Vagina (tissue), 2 donors: ENCODE measurements at regions of chr1 and their contacts with region 1.

Region 1: DNA sequence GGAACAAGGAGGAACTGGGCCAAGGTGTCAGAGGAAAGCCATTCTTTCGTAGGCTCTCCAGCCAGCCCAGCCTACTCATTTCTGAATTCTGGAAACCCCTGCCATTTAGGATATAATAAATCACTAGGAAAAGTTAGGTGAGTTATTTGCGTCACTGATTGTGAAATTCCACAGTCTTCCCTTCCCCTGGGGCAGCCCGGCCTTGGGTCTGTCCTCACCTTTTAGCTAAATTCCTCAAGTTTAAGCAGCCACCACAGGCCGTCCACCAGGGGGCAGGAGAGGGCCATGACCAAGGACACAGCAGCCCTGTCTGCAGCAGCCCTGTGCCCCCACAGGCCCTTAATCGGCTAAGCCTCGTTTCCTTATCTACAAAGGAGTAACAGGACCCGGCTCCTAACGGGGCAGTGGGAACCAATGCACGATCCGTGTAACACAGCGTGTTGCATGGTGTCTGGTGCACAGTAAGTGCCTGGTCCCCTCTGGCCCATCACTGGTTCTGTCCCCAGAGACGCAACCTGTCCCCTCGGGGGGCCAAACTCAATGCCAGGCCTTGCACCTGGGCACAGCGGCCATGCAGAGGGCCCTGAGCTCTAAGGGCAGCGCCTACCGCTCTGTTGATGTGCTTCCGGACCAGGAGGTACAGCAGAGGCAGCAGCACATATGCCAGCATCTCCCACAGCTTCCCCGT is 18.1 kb downstream of the GPR157 start:
- DNase-seq: peak in 1 of 2 donors; percentile 94
- H3K4me3 ChIP-seq: no peak overlapping the region
- H3K27ac ChIP-seq: peak overlapping the region; percentile 3
- H3K4me1 ChIP-seq: peaks cover 16% of the 10 kb centered on the region
- H3K27me3 ChIP-seq: no peaks in the 10 kb centered on the region
- CTCF ChIP-seq: peak; percentile 90 to 95 (median 90)
- POLR2A ChIP-seq: no peak

Region 2: DNA sequence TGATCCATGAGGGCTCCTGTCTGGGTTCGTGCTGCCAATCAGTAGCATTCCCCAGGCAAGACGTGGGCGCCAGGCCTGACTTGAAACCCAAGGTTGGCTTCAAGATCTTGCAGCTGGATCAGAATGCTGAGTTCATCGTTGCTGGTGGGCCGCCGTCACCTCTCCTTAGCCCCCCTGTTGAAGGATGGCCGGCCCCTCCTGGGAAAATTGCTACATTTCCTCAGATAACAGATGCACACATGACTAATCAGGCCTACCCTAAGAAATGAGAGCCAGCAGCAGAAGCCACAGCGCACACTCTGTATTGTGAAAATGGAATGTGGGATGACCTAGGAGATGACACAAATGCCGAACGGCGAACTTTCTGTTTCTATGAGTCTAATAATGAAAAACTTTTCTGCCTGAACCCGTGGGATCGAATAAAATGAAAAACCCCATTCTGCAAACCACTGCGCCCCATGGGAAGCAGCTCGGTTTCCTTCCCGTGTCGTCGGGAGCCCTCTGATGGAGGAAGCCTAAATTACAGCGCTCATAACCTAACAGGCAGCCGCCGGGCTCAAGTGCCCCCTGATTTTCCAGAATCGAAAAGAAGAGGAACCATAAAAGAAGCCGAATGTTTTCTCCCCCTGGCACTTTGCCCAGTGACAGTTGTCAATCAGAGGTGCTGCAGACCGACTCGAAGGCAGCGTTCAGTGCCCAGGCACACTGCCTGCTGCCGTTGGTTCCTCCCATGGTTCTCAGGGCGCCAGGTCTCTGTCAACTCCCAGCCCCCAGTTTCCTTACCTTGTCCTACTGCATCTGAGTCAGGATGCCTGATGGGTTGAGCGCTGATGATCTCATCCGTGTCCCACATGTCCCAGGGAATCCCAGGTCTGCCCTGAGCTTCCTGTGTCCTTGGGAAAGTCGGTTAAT is 85.6 kb after region 1 on chr1:
- intact Hi-C with region 1: loop called (anchors 5 kb)
- DNase-seq: no peak
- H3K4me3 ChIP-seq: no peak overlapping the region
- H3K27ac ChIP-seq: peak overlapping the region; percentile 15
- H3K4me1 ChIP-seq: peaks cover 29% of the 10 kb centered on the region
- H3K27me3 ChIP-seq: no peaks in the 10 kb centered on the region
- CTCF ChIP-seq: peak; percentile 49 to 84 (median 78)
- POLR2A ChIP-seq: no peak

Region 3: DNA sequence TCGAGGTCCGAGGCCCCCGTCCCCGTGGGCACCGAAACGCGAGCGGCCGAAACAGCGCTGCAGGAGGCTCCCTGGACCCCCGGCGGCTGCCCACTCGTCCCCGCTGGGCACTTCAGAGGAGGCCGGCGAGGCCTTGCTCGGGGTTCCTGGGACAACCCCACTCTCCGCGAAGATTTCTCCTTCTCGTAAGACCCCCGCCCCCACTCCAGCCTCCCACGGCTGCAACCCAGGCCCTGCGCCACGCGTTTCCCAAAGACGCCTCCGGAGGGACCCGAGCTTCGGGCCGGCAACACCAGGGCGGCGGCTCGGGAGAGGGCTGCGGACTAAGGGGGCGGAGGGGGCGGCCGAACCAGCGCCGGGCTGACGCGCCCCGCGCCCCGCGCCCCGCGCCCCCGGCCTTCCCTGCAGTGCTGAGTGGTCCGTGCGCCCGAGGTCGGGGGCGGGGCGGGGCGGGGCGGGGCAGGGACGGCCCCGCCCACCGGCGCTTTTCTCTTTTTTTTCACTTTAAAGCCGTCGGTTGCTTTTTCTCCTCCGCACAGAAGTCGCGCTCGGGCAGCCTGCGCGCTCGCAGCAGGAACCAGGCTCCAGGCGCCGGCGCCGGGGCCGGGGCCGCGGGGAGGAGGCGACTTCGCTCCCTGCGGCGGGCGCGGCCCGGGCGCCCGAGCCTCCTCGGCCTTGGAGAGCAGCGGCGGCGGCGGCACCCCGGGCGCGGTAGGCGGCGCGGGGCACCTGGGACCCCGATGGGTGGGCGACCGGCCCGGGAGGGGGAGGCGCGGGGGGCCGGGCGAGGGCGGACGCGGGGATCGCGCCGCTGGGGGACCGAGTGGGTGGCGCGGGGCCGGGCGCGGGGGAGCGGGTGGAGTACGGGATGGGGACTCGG is 181.8 kb after region 1 on chr1 and contains the start of gene SPSB1:
- intact Hi-C with region 1: no loop called
- DNase-seq: no peak
- H3K4me3 ChIP-seq: peak within 1 kb of the TSS; percentile 94 to 98
- H3K27ac ChIP-seq: peak within 1 kb of the TSS; percentile 98
- H3K4me1 ChIP-seq: peaks cover 60% of the 10 kb centered on the region
- H3K27me3 ChIP-seq: no peaks in the 10 kb centered on the region
- CTCF ChIP-seq: no peak
- POLR2A ChIP-seq: peak in 1 of 2 donors; percentile 90
- total RNA-seq, gene SPSB1: 40.0 TPM

Region 4: DNA sequence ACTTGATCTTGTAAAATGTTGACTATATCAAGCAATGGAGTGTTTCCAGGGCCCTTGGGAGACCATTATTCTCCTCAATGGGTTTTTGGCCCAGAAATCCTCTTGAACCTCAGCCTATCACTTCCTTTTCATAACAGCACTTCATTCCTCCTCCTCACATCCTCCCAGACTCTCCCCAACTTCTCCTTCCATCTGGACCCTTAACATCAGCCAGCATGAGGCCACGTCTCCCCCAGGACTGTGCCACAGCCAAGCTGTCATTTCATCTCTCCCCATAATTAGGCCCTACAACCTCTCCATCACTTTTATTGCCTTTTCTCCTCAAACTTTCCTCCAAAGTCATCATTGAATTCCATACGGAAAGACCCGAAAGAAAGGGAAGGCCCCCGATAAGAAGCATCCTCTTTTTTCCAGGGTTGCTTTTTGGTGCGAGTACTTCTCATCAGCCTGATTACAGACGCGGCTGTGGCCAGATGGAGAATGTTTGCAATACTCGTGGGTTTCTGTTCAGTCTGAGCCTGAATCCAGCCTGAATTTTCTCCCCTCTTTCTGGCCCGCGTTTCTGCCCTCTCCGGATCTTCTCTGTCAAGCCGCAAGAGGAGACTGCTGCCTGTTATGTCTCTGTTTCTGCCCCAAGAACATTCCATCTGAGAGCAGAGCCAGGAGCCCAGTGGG is 375.8 kb after region 1 on chr1:
- intact Hi-C with region 1: loop called (anchors 10 kb)
- DNase-seq: no peak
- H3K4me3 ChIP-seq: no peak overlapping the region
- H3K27ac ChIP-seq: peak overlapping the region; percentile 18
- H3K4me1 ChIP-seq: peaks cover 17% of the 10 kb centered on the region
- H3K27me3 ChIP-seq: no peaks in the 10 kb centered on the region
- CTCF ChIP-seq: no peak
- POLR2A ChIP-seq: no peak